ENCODE measurements at regions of chr6 and their contacts with region 1.

Region 1: DNA sequence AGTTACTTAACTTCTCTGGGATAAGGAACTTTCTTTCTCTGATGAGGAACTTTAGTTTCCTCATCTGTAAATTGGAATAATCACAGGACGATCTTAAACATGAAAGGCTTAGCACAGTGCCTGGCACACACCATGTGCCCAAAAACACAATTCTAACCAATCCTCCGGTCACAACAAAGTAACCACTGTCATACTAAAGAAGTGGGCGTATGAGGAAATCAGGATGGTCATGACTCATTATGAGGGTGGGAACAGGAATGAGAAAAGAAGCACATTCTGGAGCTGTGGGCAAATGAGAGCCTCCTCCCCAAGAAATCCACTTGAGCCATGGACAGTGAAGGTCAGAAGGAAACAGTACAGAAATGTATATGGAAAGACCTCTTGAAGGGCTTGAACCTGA is 82.9 kb downstream of the LRFN2 start:
- DNase-seq: no peak
- H3K4me3 ChIP-seq: no peak overlapping the region
- H3K27ac ChIP-seq: no peak overlapping the region
- H3K4me1 ChIP-seq: no peaks in the 10 kb centered on the region
- H3K27me3 ChIP-seq: no peaks in the 10 kb centered on the region
- CTCF ChIP-seq: no peak
- POLR2A ChIP-seq: no peak

Region 2: DNA sequence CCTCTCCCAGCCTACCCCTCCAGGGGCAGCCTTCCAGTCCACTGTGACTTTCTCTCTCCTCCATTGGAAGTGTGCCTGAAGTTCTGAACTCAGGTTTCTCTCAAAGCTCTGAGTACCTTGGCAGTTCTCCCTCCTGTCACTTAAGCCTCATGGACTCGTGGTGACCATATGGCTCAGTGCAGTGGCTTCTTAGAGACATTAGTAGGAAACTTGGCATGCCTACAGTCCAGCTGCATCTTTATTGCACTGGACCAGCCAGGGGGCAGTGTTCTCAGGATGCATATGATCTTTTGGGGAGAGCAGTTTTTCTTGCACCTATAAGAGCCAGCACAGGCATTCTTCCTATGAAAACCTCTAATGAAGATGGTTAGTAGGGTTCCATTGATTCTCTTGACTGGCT is 1134.3 kb before region 1 on chr6:
- intact Hi-C with region 1: loop called (anchors 5 kb)
- DNase-seq: no peak
- H3K4me3 ChIP-seq: no peak overlapping the region
- H3K27ac ChIP-seq: no peak overlapping the region
- H3K4me1 ChIP-seq: no peaks in the 10 kb centered on the region
- H3K27me3 ChIP-seq: no peaks in the 10 kb centered on the region
- CTCF ChIP-seq: no peak
- POLR2A ChIP-seq: no peak